GM12878 (cell line): ENCODE measurements at regions of chr18 and their contacts with region 1.

Region 1: GRCh38 chr18:79523736-79524180 is 128.0 kb downstream of the NFATC1 start:
- DNase-seq: peak; percentile 49
- ATAC-seq: peak; percentile 82
- H3K4me3 ChIP-seq: no peak overlapping the region
- H3K27ac ChIP-seq: peak overlapping the region; percentile 69
- H3K4me1 ChIP-seq: peaks cover 26% of the 10 kb centered on the region
- H3K27me3 ChIP-seq: no peaks in the 10 kb centered on the region
- CTCF ChIP-seq: no peak
- EP300 ChIP-seq: peak; percentile 72 to 95
- POLR2A ChIP-seq: no peak
- RAD21 ChIP-seq: no peak

Region 2: DNA sequence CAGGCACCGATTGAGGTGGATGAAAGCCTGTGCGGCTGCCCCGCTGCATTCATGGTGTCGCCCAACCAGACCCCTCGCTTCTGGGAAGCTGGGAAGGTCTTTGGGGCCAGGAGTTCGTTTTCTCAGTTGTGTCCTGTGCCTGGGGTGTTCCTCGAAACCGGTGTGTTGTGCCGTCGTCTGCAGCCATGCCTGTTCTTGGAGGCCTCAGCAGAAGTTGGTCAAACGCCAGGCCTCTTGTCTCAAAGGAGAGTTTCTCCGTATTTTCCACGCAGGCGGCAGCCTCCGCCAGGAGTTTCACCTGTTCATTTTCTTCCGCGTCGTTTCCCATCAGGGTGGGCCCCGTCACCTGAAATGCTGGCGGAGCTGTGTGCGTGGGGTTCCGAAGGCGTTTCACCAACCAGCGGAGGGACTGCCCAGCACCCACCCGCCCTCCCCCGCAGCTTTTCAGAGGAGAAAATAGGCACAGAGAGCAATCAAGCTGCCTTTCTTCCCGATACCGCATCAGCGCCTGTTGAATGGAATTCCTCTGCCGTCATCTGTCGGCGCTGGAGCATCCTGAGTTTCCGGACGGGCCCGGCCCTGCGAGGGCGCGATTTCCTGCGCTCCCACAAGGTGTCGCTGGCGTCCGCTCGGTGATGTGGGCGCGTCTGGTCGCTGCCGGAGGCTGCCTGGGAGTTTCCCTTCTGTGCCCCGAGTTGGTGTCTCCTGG is 145.1 kb before region 1 on chr18:
- CTCF ChIA-PET with region 1: interaction called, 48 read pairs
- POLR2A ChIA-PET with region 1: interaction called, 3 read pairs
- RAD21 ChIA-PET with region 1: interaction called, 9 read pairs
- SMC1A ChIA-PET with region 1: interaction called, 10 read pairs
- in situ Hi-C with region 1: no loop called
- intact Hi-C with region 1: loop called (anchors 1 kb)
- DNase-seq: peak; percentile 26
- ATAC-seq: peak; percentile 83
- H3K4me3 ChIP-seq: no peak overlapping the region
- H3K27ac ChIP-seq: no peak overlapping the region; the same call in 1 of the 2 replicates
- H3K4me1 ChIP-seq: peaks cover 9% of the 10 kb centered on the region
- H3K27me3 ChIP-seq: no peaks in the 10 kb centered on the region
- CTCF ChIP-seq: peak; percentile 95 to 99 (median 96); a peak in 5 of 6 replicates
- EP300 ChIP-seq: no peak
- POLR2A ChIP-seq: no peak
- RAD21 ChIP-seq: peak; percentile 89

Region 3: DNA sequence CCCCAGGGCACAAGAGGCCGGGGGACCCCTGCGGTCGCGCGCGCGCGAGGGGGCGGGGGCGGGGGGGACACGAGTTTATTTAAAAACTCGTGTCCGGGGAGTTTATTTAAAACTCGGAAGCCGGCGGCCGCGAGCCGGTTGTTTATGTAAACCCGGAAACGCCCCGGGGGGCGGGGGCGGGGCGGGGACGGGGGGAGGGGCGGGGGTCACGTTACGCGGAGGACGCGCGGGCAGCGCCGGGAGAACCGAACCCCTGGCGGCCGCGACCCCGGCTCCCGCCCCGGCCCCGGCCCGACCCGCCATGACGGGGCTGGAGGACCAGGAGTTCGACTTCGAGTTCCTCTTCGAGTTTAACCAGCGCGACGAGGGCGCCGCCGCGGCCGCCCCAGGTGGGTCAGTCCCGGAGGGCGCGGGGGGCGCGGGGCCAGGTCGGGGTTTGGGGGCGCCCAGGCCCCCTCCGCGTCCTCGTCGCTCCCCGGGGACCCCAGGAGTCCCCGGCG is 123.6 kb before region 1 on chr18:
- CTCF ChIA-PET with region 1: interaction called, 31 read pairs
- POLR2A ChIA-PET with region 1: interaction called, 16 read pairs
- RAD21 ChIA-PET with region 1: interaction called, 38 read pairs
- SMC1A ChIA-PET with region 1: interaction called, 22 read pairs
- in situ Hi-C with region 1: loop called (anchors 10 kb)
- intact Hi-C with region 1: loop called (anchors 5 kb)
- DNase-seq: no peak
- ATAC-seq: peak; percentile 15
- H3K4me3 ChIP-seq: peak overlapping the region; percentile 82; the same call in 1 of the 2 replicates
- H3K27ac ChIP-seq: no peak overlapping the region
- H3K4me1 ChIP-seq: peaks cover 21% of the 10 kb centered on the region
- H3K27me3 ChIP-seq: peaks cover 0 to 6% of the 10 kb centered on the region in 2 experiments; a peak in 1 of 4 replicates
- CTCF ChIP-seq: no peak
- EP300 ChIP-seq: no peak
- POLR2A ChIP-seq: no peak; the same call in 1 of the 2 replicates
- RAD21 ChIP-seq: no peak

Region 4: GRCh38 chr18:79434607-79435401 is 89.0 kb before region 1 on chr18:
- CTCF ChIA-PET with region 1: interaction called, 5 read pairs
- POLR2A ChIA-PET with region 1: interaction called, 13 read pairs
- RAD21 ChIA-PET with region 1: interaction called, 19 read pairs
- SMC1A ChIA-PET with region 1: interaction called, 22 read pairs
- in situ Hi-C with region 1: no loop called
- intact Hi-C with region 1: no loop called
- DNase-seq: no peak
- ATAC-seq: no peak
- H3K4me3 ChIP-seq: no peak overlapping the region
- H3K27ac ChIP-seq: no peak overlapping the region
- H3K4me1 ChIP-seq: peaks cover 15% of the 10 kb centered on the region
- H3K27me3 ChIP-seq: no peaks in the 10 kb centered on the region
- CTCF ChIP-seq: no peak
- EP300 ChIP-seq: no peak
- POLR2A ChIP-seq: no peak
- RAD21 ChIP-seq: no peak

Region 5: DNA sequence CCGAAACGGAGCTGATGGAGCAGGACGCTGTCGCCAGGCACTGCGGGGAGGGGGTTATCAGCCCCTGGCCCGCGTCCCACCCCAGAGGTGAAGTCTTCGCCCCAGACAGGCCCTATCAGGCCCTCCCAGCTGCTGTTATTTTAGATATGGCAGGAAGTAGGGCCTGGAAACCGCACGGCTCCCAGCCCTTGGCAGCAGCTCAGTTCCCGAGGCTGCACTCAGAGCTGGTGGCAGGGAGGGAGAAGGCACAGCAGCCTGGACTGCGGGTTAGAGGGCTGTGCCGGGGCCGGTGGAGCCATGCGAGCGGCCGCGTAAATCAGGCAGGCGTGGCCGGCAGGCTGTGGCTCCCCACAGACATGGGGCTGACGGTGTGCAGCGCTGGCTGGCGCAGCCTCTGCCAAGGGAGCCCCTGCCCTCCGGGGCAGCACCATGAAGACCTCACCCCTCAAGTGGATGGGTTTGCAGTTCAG is 16.6 kb before region 1 on chr18:
- CTCF ChIA-PET with region 1: interaction called, 14 read pairs
- POLR2A ChIA-PET with region 1: interaction called, 5 read pairs
- RAD21 ChIA-PET with region 1: interaction called, 19 read pairs
- SMC1A ChIA-PET with region 1: interaction called, 6 read pairs
- in situ Hi-C with region 1: no loop called
- intact Hi-C with region 1: no loop called
- DNase-seq: no peak
- ATAC-seq: peak; percentile 28
- H3K4me3 ChIP-seq: no peak overlapping the region
- H3K27ac ChIP-seq: no peak overlapping the region; the same call in 1 of the 2 replicates
- H3K4me1 ChIP-seq: peaks cover 33% of the 10 kb centered on the region
- H3K27me3 ChIP-seq: no peaks in the 10 kb centered on the region
- CTCF ChIP-seq: no peak
- EP300 ChIP-seq: no peak
- POLR2A ChIP-seq: peak; percentile 28; the same call in 1 of the 2 replicates
- RAD21 ChIP-seq: no peak

Region 6: DNA sequence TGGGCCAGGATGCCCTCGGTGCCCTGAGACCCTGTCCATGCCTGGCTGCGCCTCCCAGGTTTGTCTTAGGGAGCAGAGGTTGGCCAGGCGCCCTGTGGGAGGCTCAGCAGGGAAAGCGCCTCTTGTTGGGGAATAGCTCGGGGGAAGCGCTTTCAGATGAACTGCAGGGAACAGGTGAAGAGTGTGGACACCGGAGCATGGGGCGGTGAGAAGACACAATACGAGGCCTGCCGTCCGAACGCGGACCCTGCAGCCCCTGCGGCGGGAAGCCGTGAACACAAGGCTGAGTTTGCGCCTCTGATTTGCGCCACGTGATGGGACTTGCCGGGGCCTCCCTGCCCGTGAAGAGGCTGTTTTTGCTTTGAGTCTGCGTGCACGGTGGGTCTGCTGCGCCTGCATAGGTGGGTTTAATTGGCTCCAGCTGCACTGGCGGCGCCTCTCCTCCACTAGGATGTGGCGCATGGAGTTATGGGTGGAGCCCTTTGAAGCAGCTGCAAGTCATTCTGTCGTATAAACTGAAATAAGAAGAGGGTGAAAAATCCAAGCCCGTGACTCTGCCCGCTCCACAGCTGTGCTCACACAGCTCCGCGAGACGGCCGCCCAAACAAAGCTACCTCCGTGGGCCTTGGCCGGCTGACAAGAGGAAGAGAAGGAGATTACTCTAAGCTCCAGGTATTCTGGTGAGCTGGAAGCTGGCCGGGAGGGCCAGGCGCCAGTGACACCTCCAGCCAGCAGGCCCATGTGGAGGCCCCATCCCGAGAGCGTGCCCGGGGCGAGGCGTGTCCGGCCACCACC is 52.3 kb after region 1 on chr18:
- CTCF ChIA-PET with region 1: no interaction called
- POLR2A ChIA-PET with region 1: no interaction called
- RAD21 ChIA-PET with region 1: no interaction called
- SMC1A ChIA-PET with region 1: no interaction called
- in situ Hi-C with region 1: no loop called
- intact Hi-C with region 1: no loop called
- DNase-seq: no peak
- ATAC-seq: no peak
- H3K4me3 ChIP-seq: no peak overlapping the region
- H3K27ac ChIP-seq: no peak overlapping the region
- H3K4me1 ChIP-seq: no peaks in the 10 kb centered on the region
- H3K27me3 ChIP-seq: no peaks in the 10 kb centered on the region
- CTCF ChIP-seq: no peak
- EP300 ChIP-seq: no peak
- POLR2A ChIP-seq: no peak
- RAD21 ChIP-seq: no peak